A673 (cell line): ENCODE measurements at regions of chr17 and their contacts with region 1.

Region 1: DNA sequence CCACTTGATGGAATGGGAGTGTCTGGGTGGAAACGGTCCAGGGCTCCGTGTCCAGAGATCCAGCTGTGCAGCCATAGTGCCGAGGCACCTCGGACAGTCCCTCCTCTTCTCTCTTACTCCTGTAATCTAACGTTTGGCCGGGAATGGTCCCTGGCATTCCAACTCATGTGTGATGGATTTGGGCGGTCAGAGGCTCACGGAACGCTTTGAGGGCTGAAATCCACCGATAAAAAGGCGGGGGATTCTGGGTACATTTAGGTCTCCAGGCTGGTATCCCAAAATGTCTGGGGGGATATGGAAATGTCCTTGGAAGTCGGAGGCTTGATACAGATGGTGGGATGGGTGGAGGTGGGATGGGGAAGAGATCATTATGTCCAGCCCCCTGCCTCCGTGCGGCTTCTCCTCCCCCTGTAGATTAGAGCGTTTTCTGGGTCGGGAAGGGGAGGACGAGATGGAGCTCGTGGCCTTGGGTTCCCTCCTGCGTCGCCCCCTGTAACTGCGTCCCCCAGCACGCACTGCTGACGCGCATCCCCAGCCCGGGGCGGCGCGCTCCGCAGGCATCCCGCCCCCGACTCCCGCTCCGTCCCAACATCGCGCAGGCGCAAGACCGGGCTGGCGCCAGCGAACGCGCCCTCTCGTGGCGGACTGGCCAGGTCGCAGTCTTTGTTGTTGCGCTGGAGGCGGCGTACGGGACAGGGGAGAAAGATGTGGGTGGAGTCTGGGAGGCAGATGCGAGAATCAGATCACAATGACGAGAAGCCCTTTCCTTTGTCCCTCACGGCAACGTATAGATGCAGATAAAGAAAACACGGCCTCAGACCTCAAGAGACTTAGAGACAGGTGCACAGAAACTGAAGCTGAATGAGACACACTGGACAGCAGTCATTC is 4.5 kb upstream of the SGCA start:
- DNase-seq: peak; percentile 96
- H3K4me3 ChIP-seq: peak overlapping the region; percentile 47
- H3K27ac ChIP-seq: peak overlapping the region; percentile 36
- H3K4me1 ChIP-seq: peaks cover 5% of the 10 kb centered on the region
- H3K27me3 ChIP-seq: no peaks in the 10 kb centered on the region
- CTCF ChIP-seq: peak; percentile 99

Region 2: DNA sequence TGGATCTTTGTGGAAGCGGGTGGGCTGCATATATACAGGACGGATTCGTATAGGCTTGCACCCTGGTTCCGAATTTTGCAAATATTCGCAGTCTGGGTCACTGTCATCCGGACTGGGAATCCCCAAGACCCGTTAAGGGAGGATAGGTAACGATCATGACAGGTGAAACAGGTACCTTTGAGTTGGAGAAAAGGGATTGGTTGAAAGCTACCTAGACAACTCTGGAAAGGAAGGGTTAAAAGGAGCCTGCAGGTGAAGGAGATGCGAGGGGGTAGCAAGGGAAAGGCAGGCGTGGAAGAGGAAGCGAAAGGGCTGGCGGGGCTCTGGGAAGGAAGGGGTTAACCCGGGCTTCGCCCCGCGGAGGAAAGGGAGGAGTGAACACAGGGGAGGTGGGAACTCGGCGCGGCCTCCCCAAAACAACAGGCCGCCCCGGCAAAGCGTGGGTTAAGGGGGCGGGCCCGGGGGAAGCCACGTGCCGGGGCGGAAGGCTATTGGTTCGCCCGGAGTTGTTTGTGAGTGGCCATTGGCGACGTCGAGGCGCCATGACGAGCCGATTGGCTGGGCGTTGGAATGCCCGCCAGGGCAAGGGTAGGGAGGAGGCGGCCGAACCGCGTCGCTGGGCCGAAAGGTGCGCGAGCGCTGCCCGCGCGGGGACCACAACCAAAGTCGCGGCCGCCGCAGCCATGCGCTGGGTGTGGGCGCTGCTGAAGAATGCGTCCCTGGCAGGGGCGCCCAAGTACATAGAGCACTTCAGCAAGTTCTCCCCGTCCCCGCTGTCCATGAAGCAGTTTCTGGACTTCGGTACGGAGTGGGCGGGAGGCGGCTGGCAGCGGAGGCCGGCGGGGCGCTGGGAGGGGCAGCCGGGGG is 66.3 kb before region 1 on chr17 and contains the start of gene PDK2:
- CTCF ChIA-PET with region 1: interaction called, 4 read pairs
- POLR2A ChIA-PET with region 1: no interaction called
- intact Hi-C with region 1: loop called (anchors 2 kb)
- DNase-seq: peak; percentile 99
- H3K4me3 ChIP-seq: peak within 1 kb of the TSS; percentile 77
- H3K27ac ChIP-seq: peak within 1 kb of the TSS; percentile 82
- H3K4me1 ChIP-seq: peaks cover 10% of the 10 kb centered on the region
- H3K27me3 ChIP-seq: no peaks in the 10 kb centered on the region
- CTCF ChIP-seq: no peak
- total RNA-seq, gene PDK2: 20.4 and 31.6 TPM in 2 replicates

Region 3: GRCh38 chr17:50114849-50115357 is 46.4 kb before region 1 on chr17:
- CTCF ChIA-PET with region 1: interaction called, 5 read pairs
- POLR2A ChIA-PET with region 1: no interaction called
- intact Hi-C with region 1: loop called (anchors 1 kb)
- DNase-seq: peak; percentile 87
- H3K4me3 ChIP-seq: no peak overlapping the region
- H3K27ac ChIP-seq: peak overlapping the region; percentile 33
- H3K4me1 ChIP-seq: peaks cover 16% of the 10 kb centered on the region
- H3K27me3 ChIP-seq: no peaks in the 10 kb centered on the region
- CTCF ChIP-seq: peak; percentile 91

Region 4: GRCh38 chr17:50139950-50140871 is 21.1 kb before region 1 on chr17:
- CTCF ChIA-PET with region 1: interaction called, 5 read pairs
- POLR2A ChIA-PET with region 1: no interaction called
- intact Hi-C with region 1: loop called (anchors 1 kb)
- DNase-seq: peak; percentile 84
- H3K4me3 ChIP-seq: no peak overlapping the region
- H3K27ac ChIP-seq: no peak overlapping the region
- H3K4me1 ChIP-seq: no peaks in the 10 kb centered on the region
- H3K27me3 ChIP-seq: no peaks in the 10 kb centered on the region
- CTCF ChIP-seq: peak; percentile 91